ENCODE measurements at regions of chr12 and their contacts with region 1.

Region 1: DNA sequence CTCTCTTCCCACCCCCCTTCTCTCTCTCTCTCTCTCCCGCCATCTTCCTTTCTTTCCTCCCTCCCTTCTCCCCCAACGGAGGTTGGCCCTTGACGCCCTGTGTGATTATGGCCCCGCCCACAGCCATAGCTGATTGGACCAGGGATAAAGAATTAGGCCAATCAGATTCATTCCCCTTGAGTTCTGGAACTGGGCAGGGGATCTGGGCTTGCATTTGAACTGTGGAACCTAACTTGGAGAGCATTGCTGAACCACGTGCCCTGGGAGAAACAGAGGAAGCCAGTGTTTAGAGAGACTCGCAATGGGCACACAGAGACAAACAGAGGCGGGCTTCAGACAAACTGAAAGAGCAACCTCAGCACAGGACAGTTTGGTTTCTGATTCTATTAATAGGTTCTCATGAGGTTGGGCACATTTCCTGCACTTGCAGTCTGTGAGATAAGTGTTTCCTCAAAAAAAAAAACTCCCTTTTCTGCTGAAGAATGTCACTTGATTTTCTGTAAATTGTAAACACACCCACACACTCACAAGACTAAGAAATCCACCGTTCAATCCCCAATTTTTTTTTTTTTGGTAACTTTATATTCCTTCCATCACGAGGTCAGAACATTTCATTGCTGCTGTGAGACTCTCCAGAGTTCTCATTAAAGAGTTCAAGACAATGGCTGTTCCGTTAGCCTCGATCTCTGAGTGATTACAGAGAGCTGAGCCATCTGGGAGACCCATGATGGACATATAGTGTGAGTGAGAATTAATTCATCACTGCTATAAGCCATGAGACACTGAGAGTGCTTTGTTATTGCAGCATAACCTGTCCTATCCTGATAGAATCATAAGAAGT is 3.5 kb upstream of the P2RX7 start:
- DNase-seq: peak; percentile 85 to 89 (median 88)
- H3K4me3 ChIP-seq: peak overlapping the region; percentile 6 to 65 (median 17)
- H3K4me3 Mint-ChIP-seq: peak overlapping the region; percentile 55 to 91
- H3K27ac ChIP-seq: peak overlapping the region; percentile 93 to 98
- H3K27ac Mint-ChIP-seq: peak overlapping the region; percentile 96 to 99 (median 98)
- H3K4me1 ChIP-seq: peaks cover 59 to 76% of the 10 kb centered on the region in 2 donors
- H3K4me1 Mint-ChIP-seq: peaks cover 76% of the 10 kb centered on the region
- H3K27me3 ChIP-seq: no peaks in the 10 kb centered on the region
- H3K27me3 Mint-ChIP-seq: peaks cover 0 to 4% (median 1%) of the 10 kb centered on the region in 3 donors
- CTCF ChIP-seq: no peak

Region 2: GRCh38 chr12:121144416-121144914 is 15.3 kb after region 1 on chr12:
- intact Hi-C with region 1: loop called in 1 of 2 experiments (anchors 1 kb)
- DNase-seq: peak; percentile 92 to 99 (median 96)
- H3K4me3 ChIP-seq: peak overlapping the region in 1 of 3 experiments; percentile 29
- H3K4me3 Mint-ChIP-seq: peak overlapping the region; percentile 40 to 43
- H3K27ac ChIP-seq: peak overlapping the region; percentile 91 to 95
- H3K27ac Mint-ChIP-seq: peak overlapping the region; percentile 99 to 100 (median 99)
- H3K4me1 ChIP-seq: peaks cover 66 to 73% of the 10 kb centered on the region in 2 donors
- H3K4me1 Mint-ChIP-seq: peaks cover 70% of the 10 kb centered on the region
- H3K27me3 ChIP-seq: no peaks in the 10 kb centered on the region
- H3K27me3 Mint-ChIP-seq: peaks cover 0 to 3% (median 0%) of the 10 kb centered on the region in 3 donors
- CTCF ChIP-seq: no peak

Region 3: GRCh38 chr12:121175383-121176227 is 46.4 kb after region 1 on chr12:
- intact Hi-C with region 1: loop called (anchors 2 to 5 kb)
- DNase-seq: peak; percentile 79 to 94 (median 88)
- H3K4me3 ChIP-seq: no peak overlapping the region
- H3K4me3 Mint-ChIP-seq: peak overlapping the region; percentile 2 to 51
- H3K27ac ChIP-seq: peak overlapping the region; percentile 51 to 73
- H3K27ac Mint-ChIP-seq: peak overlapping the region; percentile 87 to 96 (median 92)
- H3K4me1 ChIP-seq: peaks cover 28 to 36% of the 10 kb centered on the region in 2 donors
- H3K4me1 Mint-ChIP-seq: peaks cover 32% of the 10 kb centered on the region
- H3K27me3 ChIP-seq: no peaks in the 10 kb centered on the region
- H3K27me3 Mint-ChIP-seq: peaks cover 0 to 6% (median 0%) of the 10 kb centered on the region in 3 donors
- CTCF ChIP-seq: no peak

Region 4: DNA sequence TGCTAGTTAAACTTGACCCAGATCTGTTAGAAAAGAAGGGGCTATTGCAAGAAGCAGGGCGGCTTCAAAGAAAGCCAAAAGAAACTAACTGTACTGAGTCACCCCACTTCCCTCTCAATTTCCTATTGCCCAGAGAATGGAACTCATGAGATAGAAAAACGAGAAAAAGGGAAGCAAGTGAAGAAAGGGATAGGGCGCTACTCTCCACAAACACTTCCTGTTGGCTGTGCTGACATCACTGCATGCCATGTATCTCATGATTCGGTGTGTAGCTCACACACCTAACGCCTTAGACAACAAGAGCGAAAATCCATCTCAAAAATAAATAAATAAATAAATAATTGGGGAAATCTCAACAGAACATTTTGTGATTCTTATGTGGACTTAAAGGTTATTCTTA is 67.7 kb after region 1 on chr12:
- intact Hi-C with region 1: loop called in 1 of 2 experiments (anchors 1 kb)
- DNase-seq: peak; percentile 90 to 98 (median 97)
- H3K4me3 ChIP-seq: peak overlapping the region in 1 of 3 experiments; percentile 58
- H3K4me3 Mint-ChIP-seq: peak overlapping the region; percentile 52 to 72
- H3K27ac ChIP-seq: peak overlapping the region; percentile 90 to 93
- H3K27ac Mint-ChIP-seq: peak overlapping the region; percentile 95 to 99 (median 98)
- H3K4me1 ChIP-seq: peaks cover 15 to 22% of the 10 kb centered on the region in 2 donors
- H3K4me1 Mint-ChIP-seq: peaks cover 15% of the 10 kb centered on the region
- H3K27me3 ChIP-seq: no peaks in the 10 kb centered on the region
- H3K27me3 Mint-ChIP-seq: peaks cover 0 to 3% (median 0%) of the 10 kb centered on the region in 3 donors
- CTCF ChIP-seq: no peak